RWPE1 (cell line): ENCODE measurements at regions of chr17 and their contacts with region 1.

Region 1: DNA sequence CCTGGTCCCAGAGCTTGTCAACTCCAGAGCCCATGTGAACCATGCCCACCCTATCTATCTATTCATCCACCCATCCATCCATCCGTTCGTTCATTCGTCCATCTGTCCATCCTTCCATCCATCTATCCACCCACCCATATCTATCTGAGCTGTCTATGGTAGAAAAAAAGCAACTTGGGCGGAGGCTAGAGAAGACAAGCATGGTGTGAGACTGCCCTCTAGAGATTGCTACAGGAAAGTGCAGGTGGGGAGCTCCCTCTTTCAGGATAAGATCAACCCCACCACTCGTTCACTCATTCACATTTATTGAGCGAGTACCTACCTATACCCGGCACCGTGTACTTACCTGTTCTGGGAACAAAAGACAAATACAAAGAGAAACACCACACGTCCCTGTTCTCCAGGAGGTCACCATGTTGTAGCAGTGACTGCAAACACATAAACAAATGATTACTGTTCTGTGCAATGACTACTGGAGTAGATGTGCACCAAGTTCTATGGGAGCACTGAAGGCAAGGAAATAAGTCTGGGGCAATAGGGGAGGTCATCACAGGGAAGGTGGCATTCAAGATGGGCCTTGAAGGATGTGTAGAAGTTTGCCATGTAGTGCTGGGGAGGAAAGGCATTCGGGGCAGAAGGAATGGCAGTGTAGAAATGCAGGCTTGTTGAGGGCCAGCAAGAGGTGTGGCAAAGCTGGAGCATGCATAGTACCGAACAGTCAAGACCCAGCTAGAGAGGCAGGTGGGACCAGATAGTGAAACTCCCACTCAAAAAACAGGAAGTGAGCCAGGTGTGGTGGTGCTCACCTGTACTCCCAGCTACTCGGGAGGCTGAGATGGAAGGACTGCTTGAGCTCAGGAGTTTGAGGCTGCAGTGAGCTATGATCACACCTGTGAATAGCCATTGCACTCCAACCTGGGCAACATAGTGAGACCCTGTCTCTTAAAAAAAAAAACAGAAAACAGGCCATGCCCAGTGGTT is 13.4 kb upstream of the ATP5MC1 start:
- DNase-seq: peak; percentile 81
- H3K27ac ChIP-seq: no peak overlapping the region
- CTCF ChIP-seq: peak; percentile 95

Region 2: GRCh38 chr17:48671697-48672171 is 207.5 kb before region 1 on chr17:
- CTCF ChIA-PET with region 1: interaction called, 16 read pairs
- POLR2A ChIA-PET with region 1: no interaction called
- DNase-seq: peak; percentile 63
- H3K27ac ChIP-seq: no peak overlapping the region
- CTCF ChIP-seq: peak; percentile 93

Region 3: GRCh38 chr17:48804925-48805411 is 74.2 kb before region 1 on chr17:
- CTCF ChIA-PET with region 1: interaction called, 28 read pairs
- POLR2A ChIA-PET with region 1: no interaction called
- DNase-seq: peak; percentile 81
- H3K27ac ChIP-seq: no peak overlapping the region
- CTCF ChIP-seq: peak; percentile 96

Region 4: GRCh38 chr17:48825446-48826381 is 53.5 kb before region 1 on chr17:
- CTCF ChIA-PET with region 1: interaction called, 11 read pairs
- POLR2A ChIA-PET with region 1: no interaction called
- DNase-seq: no peak
- H3K27ac ChIP-seq: no peak overlapping the region
- CTCF ChIP-seq: no peak

Region 5: DNA sequence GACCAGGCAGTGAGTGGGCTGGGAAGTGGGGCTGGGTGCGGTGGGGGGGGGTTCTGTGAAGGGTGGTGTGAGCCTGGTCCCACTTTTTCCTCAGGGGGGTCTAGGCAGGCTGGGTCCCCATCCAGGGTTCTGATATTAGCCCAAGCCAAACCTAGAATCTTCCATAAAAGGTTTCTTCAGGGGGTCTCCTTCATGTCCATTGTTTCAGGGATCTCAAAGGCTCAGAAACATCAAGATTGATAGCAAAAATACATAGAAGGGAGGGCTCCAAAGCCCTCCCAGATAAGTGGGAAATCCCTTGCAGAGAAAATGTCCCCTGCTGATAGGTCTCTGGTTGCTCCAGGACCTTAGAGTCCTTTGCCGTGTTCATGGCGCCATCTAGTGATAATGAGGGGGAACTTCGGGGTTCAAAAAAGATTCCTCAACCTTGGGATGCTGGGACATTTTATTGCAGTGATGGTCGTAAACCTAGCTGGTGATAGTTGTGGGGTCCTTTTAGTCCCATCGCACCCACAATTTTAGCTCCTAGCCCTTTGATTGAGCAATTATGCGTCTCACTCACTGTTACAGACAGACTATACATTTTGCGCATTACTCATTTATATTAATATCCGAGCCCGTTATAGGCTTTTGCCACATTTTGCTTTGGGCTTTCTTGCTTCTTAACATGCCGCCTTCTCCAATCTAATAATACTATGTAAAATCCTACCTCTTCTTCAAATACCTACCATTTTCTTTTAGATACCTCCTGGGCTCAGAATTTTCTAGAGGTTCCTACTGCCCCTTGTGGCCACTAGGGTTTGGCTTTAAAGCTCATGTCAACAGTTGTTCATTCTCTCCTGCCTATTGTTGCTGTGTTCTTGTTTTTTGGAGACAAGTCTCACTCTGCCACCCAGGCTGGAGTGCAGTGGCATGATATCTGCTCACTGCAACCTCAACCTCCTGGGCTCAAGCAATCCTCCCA is 153.0 kb after region 1 on chr17:
- CTCF ChIA-PET with region 1: interaction called, 10 read pairs
- POLR2A ChIA-PET with region 1: no interaction called
- DNase-seq: peak; percentile 85
- H3K27ac ChIP-seq: no peak overlapping the region
- CTCF ChIP-seq: peak; percentile 89

Region 6: DNA sequence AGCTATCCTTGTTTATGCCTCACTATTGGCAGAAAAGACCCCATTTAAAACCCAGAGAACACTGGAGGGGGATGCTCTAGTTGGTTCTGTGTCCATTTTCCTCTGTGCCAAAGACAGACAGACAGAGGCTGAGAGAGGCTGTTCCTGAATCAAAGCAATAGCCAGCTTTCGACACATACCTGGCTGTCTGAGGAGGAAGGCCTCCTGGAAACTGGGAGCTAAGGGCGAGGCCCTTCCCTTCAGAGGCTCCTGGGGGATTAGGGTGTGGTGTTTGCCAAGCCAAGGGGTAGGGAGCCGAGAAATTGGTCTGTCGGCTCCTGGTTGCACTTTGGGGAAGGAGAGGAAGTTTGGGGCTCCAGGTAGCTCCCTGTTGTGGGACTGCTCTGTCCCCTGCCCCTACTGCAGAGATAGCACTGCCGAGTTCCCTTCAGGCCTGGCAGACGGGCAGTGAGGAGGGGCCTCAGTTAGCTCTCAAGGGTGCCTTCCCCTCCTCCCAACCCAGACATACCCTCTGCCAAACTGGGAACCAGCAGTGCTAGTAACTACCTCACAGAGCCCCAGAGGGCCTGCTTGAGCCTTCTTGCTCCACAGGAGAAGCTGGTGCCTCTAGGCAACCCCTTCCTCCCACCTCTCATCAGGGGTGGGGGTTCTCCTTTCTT is 174.1 kb after region 1 on chr17:
- CTCF ChIA-PET with region 1: no interaction called
- POLR2A ChIA-PET with region 1: no interaction called
- DNase-seq: no peak
- H3K27ac ChIP-seq: no peak overlapping the region
- CTCF ChIP-seq: no peak